ENCODE measurements at regions of chr21 and their contacts with region 1.

Region 1: GRCh38 chr21:31873696-31874599 is 1.1 kb downstream of the HUNK start:
- DNase-seq: no peak
- H3K4me3 ChIP-seq: peak overlapping the region; percentile 51 to 79 (median 60)
- H3K27ac ChIP-seq: peak overlapping the region in 1 of 4 donors; percentile 53
- H3K4me1 ChIP-seq: peaks cover 15 to 44% (median 16%) of the 10 kb centered on the region in 3 donors
- H3K27me3 ChIP-seq: peaks cover 0 to 88% (median 0%) of the 10 kb centered on the region in 4 donors
- CTCF ChIP-seq: peak in 5 of 6 experiments; percentile 38 to 64 (median 46)
- POLR2A ChIP-seq: no peak

Region 2: DNA sequence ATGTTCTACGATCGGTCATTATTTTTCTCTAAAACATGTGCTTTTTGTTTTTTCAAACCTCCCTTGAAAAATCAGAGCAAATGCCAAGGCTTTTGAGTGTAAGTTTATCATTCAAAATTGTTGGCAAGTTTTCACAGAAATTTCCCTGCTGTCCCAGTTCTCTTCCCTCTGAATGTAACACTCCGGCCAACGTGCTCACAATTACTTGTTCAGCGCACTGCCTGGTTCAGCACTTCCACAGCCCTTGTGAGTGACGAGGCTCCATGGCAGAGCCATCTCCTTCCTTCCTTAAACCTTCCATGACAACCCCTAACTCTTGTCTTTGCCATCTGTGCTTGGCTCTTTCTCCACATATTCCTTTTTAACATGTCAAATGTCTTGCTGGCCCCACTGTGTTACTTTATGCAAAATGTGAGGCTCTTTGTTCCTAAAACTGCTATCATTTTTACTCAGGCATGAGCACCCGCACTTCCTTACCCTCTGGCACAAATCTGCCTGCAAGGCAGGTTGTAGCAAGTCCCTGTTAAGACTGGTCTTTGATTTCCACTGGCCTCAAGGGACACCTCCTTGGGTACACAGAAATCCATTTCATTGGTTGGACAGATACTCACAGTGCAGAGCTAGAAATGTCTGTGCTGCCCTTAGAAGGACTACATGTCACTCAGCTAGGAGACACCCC is 141.7 kb after region 1 on chr21:
- intact Hi-C with region 1: loop called (anchors 10 kb)
- DNase-seq: no peak
- H3K4me3 ChIP-seq: no peak overlapping the region
- H3K27ac ChIP-seq: no peak overlapping the region
- H3K4me1 ChIP-seq: peaks cover 3 to 19% (median 6%) of the 10 kb centered on the region in 3 donors
- H3K27me3 ChIP-seq: no peaks in the 10 kb centered on the region
- CTCF ChIP-seq: no peak
- POLR2A ChIP-seq: no peak